Breast epithelium (tissue), 4 donors: ENCODE measurements at regions of chr18 and their contacts with region 1.

Region 1: DNA sequence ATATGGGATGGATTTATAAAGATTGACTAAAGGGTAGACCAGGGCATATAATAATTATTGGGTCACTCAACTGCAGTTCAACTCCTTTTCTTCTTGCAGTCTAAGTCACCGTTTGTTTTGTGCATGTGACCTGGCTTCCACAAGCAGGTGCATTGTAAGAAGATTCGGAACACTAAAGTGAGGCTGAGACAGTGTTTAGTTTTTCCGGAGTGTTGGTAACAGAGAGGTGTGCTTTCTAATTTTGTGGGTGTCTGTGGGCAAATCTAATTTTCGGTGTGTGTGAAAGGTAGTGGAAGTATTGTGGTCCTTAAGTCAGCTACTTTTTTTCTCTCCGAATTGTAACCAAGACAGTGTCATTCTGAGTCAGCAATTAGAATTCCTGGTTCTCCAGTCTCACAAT is 184.5 kb downstream of the CDH19 start:
- DNase-seq: no peak
- H3K4me3 ChIP-seq: no peak overlapping the region
- H3K27ac ChIP-seq: no peak overlapping the region
- H3K4me1 ChIP-seq: no peaks in the 10 kb centered on the region
- H3K27me3 ChIP-seq: no peaks in the 10 kb centered on the region
- CTCF ChIP-seq: no peak
- POLR2A ChIP-seq: no peak

Region 2: DNA sequence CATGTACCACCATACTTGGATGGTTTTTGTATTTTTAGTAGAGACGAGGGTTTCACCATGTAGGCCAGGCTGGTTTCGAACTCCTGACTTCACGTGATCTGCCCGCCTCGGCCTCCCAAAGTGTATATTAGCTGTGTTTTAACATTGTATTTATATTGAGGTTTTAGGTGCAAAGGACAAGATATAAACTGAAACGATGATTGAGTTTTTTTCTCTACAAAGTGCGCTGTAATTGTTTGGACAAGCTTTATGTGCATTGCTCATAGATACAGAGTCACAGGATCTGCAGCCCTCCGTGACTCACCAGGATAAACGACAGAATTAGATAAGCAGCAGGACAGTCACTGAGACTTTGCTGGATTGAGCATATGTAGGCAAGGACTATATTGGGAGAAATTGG is 651.0 kb before region 1 on chr18:
- intact Hi-C with region 1: no loop called
- DNase-seq: no peak
- H3K4me3 ChIP-seq: no peak overlapping the region
- H3K27ac ChIP-seq: no peak overlapping the region
- H3K4me1 ChIP-seq: no peaks in the 10 kb centered on the region
- H3K27me3 ChIP-seq: no peaks in the 10 kb centered on the region
- CTCF ChIP-seq: no peak
- POLR2A ChIP-seq: no peak

Region 3: GRCh38 chr18:66377291-66377690 is 42.1 kb before region 1 on chr18:
- intact Hi-C with region 1: loop called (anchors 2 kb)
- DNase-seq: no peak
- H3K4me3 ChIP-seq: no peak overlapping the region
- H3K27ac ChIP-seq: no peak overlapping the region
- H3K4me1 ChIP-seq: no peaks in the 10 kb centered on the region
- H3K27me3 ChIP-seq: no peaks in the 10 kb centered on the region
- CTCF ChIP-seq: no peak
- POLR2A ChIP-seq: no peak

Region 4: GRCh38 chr18:66461344-66461743 is 41.9 kb after region 1 on chr18:
- intact Hi-C with region 1: no loop called
- DNase-seq: no peak
- H3K4me3 ChIP-seq: no peak overlapping the region
- H3K27ac ChIP-seq: no peak overlapping the region
- H3K4me1 ChIP-seq: no peaks in the 10 kb centered on the region
- H3K27me3 ChIP-seq: no peaks in the 10 kb centered on the region
- CTCF ChIP-seq: no peak
- POLR2A ChIP-seq: no peak